ENCODE measurements at regions of chr6 and their contacts with region 1.

Region 1: GRCh38 chr6:126170978-126171382 is 168.9 kb upstream of the CENPW start:
- H3K4me3 Mint-ChIP-seq: peak overlapping the region; percentile 44
- H3K27ac Mint-ChIP-seq: no peak overlapping the region
- H3K4me1 Mint-ChIP-seq: peaks cover 6% of the 10 kb centered on the region
- H3K27me3 Mint-ChIP-seq: no peaks in the 10 kb centered on the region

Region 2: DNA sequence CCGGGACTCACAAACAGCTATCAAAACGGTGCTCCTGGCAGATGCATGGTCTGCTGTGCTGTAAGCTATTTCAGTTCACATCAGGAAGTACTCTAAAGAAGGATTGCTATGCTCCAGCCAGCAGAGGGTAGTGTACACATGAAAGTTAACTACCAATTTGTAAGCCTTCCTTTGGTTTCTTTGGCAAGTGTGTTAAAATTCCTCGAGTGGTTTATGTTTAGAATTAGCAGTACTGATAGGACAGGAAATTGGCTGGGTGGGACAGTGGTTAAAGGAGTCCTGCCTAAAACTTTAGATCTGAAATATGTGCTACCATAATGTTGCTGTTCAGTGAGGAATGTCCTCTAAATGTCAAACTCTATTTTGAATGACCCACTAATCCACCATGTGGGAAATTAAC is 137.3 kb before region 1 on chr6:
- intact Hi-C with region 1: loop called (anchors 10 kb)
- H3K4me3 Mint-ChIP-seq: no peak overlapping the region
- H3K27ac Mint-ChIP-seq: no peak overlapping the region
- H3K4me1 Mint-ChIP-seq: no peaks in the 10 kb centered on the region
- H3K27me3 Mint-ChIP-seq: no peaks in the 10 kb centered on the region